Heart right ventricle (tissue), 16 donors: ENCODE measurements at regions of chr7 and their contacts with region 1.

Region 1: GRCh38 chr7:149624419-149625339 is 127.1 kb upstream of the ZNF746 start:
- DNase-seq: peak; percentile 91 to 95
- ATAC-seq: peak; percentile 97 to 98 (median 98)
- H3K4me3 ChIP-seq: peak overlapping the region; percentile 60 to 98 (median 95)
- H3K27ac ChIP-seq: peak overlapping the region; percentile 68 to 96 (median 93)
- H3K4me1 ChIP-seq: peaks cover 5 to 37% (median 21%) of the 10 kb centered on the region in 9 donors
- H3K27me3 ChIP-seq: no peaks in the 10 kb centered on the region
- CTCF ChIP-seq: peak; percentile 93 to 100 (median 99)

Region 2: DNA sequence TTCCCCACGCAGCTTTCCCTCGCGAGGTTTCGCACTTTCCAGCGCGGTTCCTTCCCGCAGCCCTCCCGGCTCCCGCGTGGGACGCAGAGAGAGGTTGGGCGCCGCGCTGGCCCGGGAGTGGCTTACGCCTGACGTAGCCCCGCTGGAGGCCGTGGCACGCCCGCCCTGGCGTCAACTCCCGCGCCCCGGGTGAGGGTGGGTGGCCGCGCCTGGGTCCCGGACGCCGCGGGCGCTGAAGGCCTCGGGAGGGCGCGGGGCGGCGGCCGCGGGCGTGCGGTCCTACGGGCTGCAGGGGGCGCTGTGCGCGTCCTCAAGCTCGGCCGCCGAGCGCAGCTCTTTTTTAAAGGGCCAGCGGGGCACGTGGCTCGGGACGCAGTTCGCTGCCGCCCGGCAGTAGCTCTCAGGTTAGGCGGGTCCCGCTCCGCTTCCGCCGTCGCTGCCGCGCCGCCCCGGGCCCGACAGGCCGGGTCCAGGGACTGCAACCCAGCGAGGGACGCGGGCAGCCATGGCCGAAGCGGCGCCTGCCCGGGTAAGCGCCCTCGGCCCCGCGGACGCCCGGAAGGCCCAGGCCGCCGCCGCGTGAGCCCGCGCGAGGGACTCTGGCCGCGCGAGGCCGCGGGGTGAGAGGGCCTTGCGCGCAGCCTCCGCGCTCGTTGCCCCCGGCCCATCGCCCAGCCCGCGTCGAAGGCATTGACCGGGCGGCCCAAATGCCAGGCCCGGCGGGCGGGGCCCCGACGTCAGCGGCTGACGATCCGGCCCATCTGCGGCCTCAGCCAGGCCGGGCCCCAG is 362.7 kb before region 1 on chr7 and contains the start of gene ZNF783:
- intact Hi-C with region 1: loop called in 1 of 10 experiments (anchors 10 kb)
- DNase-seq: peak; percentile 82 to 90
- ATAC-seq: peak; percentile 95 to 97 (median 96)
- H3K4me3 ChIP-seq: peak within 1 kb of the TSS; percentile 7 to 64 (median 60)
- H3K27ac ChIP-seq: peak within 1 kb of the TSS; percentile 64 to 97 (median 90)
- H3K4me1 ChIP-seq: peaks cover 0 to 28% (median 16%) of the 10 kb centered on the region in 9 donors
- H3K27me3 ChIP-seq: no peaks in the 10 kb centered on the region
- CTCF ChIP-seq: peak; percentile 65 to 95 (median 86)
- total RNA-seq, gene ZNF783: 2.6 to 6.0 (median 3.3) TPM

Region 3: GRCh38 chr7:149497456-149498261 is 127.0 kb before region 1 on chr7 and contains the start of gene ZNF746:
- intact Hi-C with region 1: loop called in 1 of 10 experiments (anchors 5 kb)
- DNase-seq: peak; percentile 64 to 87
- ATAC-seq: peak; percentile 78 to 93 (median 89)
- H3K4me3 ChIP-seq: peak within 1 kb of the TSS; percentile 59 to 94 (median 70)
- H3K27ac ChIP-seq: peak within 1 kb of the TSS; percentile 64 to 93 (median 86)
- H3K4me1 ChIP-seq: peaks cover 5 to 27% (median 15%) of the 10 kb centered on the region in 9 donors
- H3K27me3 ChIP-seq: no peaks in the 10 kb centered on the region
- CTCF ChIP-seq: peak; percentile 32 to 85 (median 62)
- total RNA-seq, gene ZNF746: 6.2 to 10.5 (median 8.5) TPM

Region 4: DNA sequence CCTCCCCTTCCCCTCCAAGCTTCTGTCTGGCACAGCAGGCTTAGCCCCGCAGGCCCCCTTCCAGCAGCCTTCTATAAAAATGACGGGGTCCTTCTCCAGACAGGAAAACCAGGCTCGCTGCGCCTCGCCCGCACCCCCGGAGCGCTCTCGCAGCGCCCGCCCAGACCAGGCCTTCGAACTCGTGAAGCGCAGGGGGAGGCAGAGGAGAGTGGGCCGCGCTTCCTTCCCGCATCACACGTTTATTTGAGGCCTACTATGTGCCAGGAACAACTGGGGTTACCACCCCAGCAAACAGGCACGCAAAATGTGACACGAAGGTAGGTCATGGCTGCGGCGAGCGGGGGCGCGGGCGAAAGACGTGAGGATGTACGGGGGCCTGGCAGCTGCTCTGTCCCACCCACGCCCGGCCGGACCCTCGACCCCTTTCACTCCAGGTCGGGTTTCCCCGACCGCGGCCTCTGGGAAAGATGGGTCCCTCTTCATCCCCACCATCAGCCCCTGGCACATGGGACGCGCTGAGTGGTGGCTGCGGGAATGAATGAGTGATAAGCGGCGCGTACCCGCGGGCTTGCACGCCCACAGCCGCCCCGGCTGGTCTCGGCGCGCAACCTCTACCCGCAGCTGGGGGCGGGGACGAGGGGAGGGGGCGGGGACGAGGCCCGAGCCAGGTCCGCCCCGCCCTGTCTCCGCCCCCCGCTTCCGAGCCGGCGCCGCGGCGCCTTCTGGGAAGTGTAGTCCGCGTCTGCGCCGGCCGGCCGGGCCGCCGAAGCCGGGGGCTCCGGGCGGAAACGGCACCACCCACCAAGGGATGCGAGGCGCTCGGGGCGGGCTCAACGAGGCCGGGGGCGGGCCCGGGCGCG is 89.6 kb after region 1 on chr7:
- intact Hi-C with region 1: loop called in 2 of 10 experiments (anchors 10 kb)
- DNase-seq: peak; percentile 91 to 95
- ATAC-seq: peak; percentile 89 to 97 (median 92)
- H3K4me3 ChIP-seq: peak overlapping the region; percentile 63 to 82 (median 76)
- H3K27ac ChIP-seq: peak overlapping the region; percentile 67 to 91 (median 86)
- H3K4me1 ChIP-seq: peaks cover 10 to 49% (median 28%) of the 10 kb centered on the region in 9 donors
- H3K27me3 ChIP-seq: no peaks in the 10 kb centered on the region
- CTCF ChIP-seq: no peak